ENCODE measurements at regions of chr1 and their contacts with region 1.

Region 1: GRCh38 chr1:207876131-207876530 is 34.8 kb downstream of the CD34 start:
- DNase-seq: peak; percentile 32
- ATAC-seq: peak; percentile 90
- H3K4me3 Mint-ChIP-seq: no peak overlapping the region
- H3K27ac Mint-ChIP-seq: no peak overlapping the region
- H3K4me1 Mint-ChIP-seq: peaks cover 7% of the 10 kb centered on the region
- H3K27me3 Mint-ChIP-seq: peaks cover 2% of the 10 kb centered on the region
- CTCF ChIP-seq: no peak

Region 2: DNA sequence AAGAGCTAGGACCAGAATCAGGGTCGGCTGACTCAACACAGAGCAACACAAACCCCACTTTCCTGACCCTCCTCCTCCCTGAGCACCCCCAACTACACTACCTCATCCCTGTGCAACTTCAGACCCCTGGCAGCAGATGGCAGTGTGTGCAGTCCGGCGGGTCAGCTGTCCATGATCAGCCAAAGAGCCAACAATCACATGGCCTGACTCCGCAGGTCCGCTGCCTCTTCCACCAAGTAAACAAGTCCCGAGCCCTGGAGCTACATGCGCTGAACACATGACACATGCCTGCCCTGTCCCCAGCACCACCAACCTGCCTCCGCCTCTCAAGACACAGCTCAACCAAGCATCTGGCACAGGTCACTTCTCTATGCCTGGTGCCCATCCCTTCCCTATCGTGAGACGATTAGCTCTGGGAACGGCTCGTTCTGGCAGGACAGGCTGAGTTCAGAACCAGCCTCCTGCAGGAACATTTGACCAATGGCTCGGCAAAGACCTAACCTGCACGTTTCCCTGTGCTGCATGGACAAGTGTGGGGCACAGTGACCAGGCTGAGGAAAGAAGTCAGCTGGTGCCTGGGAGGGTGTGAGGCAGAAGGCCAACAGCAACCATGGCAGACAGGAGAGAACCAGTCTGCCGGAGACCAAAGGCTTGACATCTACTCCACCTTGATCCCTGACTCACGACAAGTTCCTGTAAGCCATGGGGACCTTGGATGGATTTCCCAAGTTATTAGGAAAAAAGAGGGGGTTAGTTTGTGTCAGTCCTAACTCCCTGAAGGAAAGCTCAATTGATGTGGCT is 64.0 kb before region 1 on chr1:
- CTCF ChIA-PET with region 1: interaction called, 17 read pairs
- POLR2A ChIA-PET with region 1: no interaction called
- DNase-seq: peak; percentile 55
- ATAC-seq: peak; percentile 88
- H3K4me3 Mint-ChIP-seq: no peak overlapping the region
- H3K27ac Mint-ChIP-seq: no peak overlapping the region
- H3K4me1 Mint-ChIP-seq: peaks cover 10% of the 10 kb centered on the region
- H3K27me3 Mint-ChIP-seq: no peaks in the 10 kb centered on the region
- CTCF ChIP-seq: no peak

Region 3: DNA sequence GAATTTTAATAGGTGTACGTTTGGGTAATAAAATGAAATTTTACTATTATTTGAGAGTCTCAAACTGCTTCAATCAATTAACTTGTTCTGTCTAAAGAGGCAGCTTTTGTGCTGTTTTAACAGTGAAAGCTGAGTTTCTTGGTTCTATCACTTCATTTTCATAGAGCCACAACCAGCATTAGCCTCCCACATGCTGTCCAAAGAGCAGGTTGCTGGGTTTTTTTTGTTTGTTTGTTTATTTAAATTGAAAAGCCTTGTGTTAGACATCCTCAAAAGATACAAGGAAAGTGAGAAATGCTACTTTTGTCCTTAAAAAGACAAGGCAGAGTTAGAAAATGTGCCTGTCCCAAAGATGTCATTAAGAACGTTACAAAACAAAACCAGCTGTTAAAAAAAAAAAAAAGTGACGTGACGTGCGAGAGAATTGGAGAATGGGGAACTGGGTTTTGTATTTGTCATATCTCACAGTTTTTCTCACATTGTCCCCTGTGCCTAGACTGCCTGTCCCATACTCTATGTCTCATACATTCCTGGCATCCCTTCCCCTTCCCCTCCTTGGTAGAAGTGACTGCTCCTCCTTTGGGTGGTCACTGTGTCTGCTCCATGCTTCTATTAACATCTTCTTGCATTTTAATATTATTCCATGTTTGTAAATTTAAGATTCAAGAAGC is 97.9 kb after region 1 on chr1:
- CTCF ChIA-PET with region 1: interaction called, 11 read pairs
- POLR2A ChIA-PET with region 1: no interaction called
- DNase-seq: no peak
- ATAC-seq: no peak
- H3K4me3 Mint-ChIP-seq: no peak overlapping the region
- H3K27ac Mint-ChIP-seq: no peak overlapping the region
- H3K4me1 Mint-ChIP-seq: no peaks in the 10 kb centered on the region
- H3K27me3 Mint-ChIP-seq: no peaks in the 10 kb centered on the region; the same call in 1 of the 2 replicates
- CTCF ChIP-seq: no peak